ENCODE measurements at regions of chr18 and their contacts with region 1.

Region 1: DNA sequence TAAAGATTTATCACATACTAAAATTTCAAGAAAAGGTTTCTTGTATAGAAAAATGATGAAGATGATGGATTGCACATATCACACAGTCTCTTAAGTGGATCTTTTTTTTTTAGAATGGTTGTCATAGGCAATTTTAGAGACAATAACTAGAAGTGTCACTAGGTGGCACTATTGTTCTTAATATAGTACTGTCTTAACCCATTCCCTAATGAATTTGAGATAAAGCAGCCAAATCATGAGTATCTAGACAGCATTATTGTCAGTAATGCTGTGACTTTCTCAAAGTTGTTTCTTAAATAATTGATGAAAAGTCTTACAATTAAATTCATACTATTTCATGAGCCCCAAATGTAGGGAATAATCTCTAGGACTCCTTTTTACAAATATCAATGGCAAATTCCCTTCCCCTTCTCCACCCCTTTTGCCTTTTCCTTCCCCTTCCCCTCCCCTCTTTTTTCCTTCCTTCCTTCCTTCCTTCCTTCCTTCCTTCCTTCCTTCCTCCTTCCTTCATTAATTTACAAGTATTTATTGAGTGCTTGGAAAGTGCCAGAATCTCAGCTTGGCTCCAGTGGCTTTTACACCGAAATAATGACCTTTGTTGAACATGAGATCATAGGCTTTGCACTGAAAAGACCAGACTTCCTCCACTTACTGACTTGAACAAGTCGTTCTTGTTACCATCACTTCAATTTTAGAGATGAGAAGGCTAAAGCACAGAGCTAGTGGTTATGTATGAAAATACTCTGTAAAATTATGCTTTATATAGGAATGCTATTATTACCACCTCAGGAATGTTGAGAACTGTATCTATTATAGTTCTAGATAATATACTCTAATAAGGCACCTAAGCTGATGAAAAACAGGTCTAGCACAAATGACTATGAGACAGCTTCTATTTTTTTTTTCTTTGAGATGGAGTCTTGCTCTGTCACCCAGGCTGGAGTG is 19.8 kb downstream of the MYL12B start:
- DNase-seq: no peak
- H3K4me3 ChIP-seq: peak overlapping the region in 14 of 59 donors; percentile 3 to 57 (median 40)
- H3K27ac ChIP-seq: peak overlapping the region in 47 of 59 donors; percentile 3 to 92 (median 79)
- H3K27me3 ChIP-seq: no peaks in the 10 kb centered on the region
- CTCF ChIP-seq: peak; percentile 56 to 95 (median 86)

Region 2: GRCh38 chr18:3397071-3397745 is 115.5 kb after region 1 on chr18:
- intact Hi-C with region 1: loop called in 1 of 2 experiments (anchors 2 kb)
- DNase-seq: peak in 5 of 10 donors; percentile 10 to 67 (median 54)
- H3K4me3 ChIP-seq: peak overlapping the region in 8 of 59 donors; percentile 2 to 46 (median 17)
- H3K27ac ChIP-seq: peak overlapping the region in 58 of 59 donors; percentile 68 to 99 (median 95)
- H3K27me3 ChIP-seq: peaks cover 0 to 3% (median 0%) of the 10 kb centered on the region in 45 donors
- CTCF ChIP-seq: peak in 14 of 56 donors; percentile 3 to 38 (median 17)

Region 3: GRCh38 chr18:3525870-3526420 is 244.2 kb after region 1 on chr18:
- intact Hi-C with region 1: loop called (anchors 10 kb)
- DNase-seq: peak in 9 of 10 donors; percentile 47 to 70 (median 63)
- H3K4me3 ChIP-seq: peak overlapping the region in 54 of 59 donors; percentile 0 to 66 (median 40)
- H3K27ac ChIP-seq: peak overlapping the region in 58 of 59 donors; percentile 14 to 93 (median 74)
- H3K27me3 ChIP-seq: no peaks in the 10 kb centered on the region
- CTCF ChIP-seq: peak in 8 of 56 donors; percentile 8 to 17 (median 13)

Region 4: GRCh38 chr18:3665780-3666525 is 384.2 kb after region 1 on chr18:
- intact Hi-C with region 1: loop called (anchors 2 kb)
- DNase-seq: peak; percentile 76 to 89 (median 83)
- H3K4me3 ChIP-seq: peak overlapping the region in 57 of 59 donors; percentile 6 to 67 (median 42)
- H3K27ac ChIP-seq: peak overlapping the region in 47 of 59 donors; percentile 5 to 83 (median 55)
- H3K27me3 ChIP-seq: no peaks in the 10 kb centered on the region
- CTCF ChIP-seq: peak; percentile 90 to 99 (median 97)

Region 5: DNA sequence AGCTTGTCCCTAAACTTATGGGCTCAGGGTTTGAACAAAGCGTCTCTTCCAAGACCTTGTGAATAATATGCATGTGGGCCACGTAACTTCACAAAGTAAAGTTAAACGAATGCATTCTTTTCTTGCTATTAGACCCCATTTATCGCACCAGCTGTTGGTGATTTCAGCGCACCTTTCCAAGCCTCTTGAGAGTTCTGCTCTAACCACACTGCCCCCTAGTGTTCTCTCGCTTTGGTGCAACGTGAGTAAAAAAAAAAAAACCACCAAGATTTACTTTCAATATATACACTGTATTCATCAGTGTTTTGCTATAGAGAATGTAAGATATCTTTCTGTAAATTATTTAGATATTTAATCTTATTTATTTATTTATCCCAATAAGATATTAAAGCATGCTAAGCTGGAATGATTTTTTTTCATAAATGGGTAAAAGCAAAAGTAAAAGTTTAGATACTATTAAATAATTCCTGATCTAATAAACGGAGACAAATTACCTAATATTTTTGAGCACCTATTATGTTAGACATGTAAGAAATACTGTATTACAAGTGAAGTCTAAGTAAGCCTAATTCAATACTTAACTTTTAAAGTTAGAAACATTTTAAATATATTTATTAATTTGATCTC is 713.9 kb after region 1 on chr18:
- intact Hi-C with region 1: loop called in 1 of 2 experiments (anchors 10 kb)
- DNase-seq: peak in 3 of 10 donors; percentile 36 to 62 (median 51)
- H3K4me3 ChIP-seq: peak overlapping the region in 57 of 59 donors; percentile 0 to 59 (median 38)
- H3K27ac ChIP-seq: peak overlapping the region in 29 of 59 donors; percentile 1 to 85 (median 66)
- H3K27me3 ChIP-seq: no peaks in the 10 kb centered on the region
- CTCF ChIP-seq: peak; percentile 77 to 95 (median 86)